ENCODE measurements at regions of chr6 and their contacts with region 1.

Region 1: DNA sequence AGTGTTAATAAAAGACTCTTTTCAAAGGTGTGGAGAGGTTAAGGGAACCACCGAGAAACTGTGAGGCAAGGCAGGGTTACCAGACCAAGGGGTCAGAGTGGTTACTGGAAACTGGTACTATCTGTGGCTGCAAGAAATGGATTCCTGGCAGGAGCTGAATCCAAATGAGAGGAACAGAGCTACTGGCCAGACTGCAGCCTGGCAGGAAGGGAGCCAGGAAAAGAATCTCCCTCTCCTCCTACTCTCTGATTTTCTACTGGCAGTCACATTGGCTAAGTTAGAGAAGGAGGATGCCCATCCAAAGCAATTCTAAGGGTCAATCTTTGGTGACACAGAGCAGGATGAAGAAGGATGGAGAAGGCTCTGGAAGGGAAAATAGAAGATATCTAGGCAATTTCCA is 211.5 kb downstream of the GRM1 start:
- DNase-seq: no peak
- H3K4me3 ChIP-seq: no peak overlapping the region
- H3K4me3 Mint-ChIP-seq: no peak overlapping the region
- H3K27ac ChIP-seq: no peak overlapping the region
- H3K27ac Mint-ChIP-seq: no peak overlapping the region
- H3K4me1 ChIP-seq: no peaks in the 10 kb centered on the region
- H3K4me1 Mint-ChIP-seq: no peaks in the 10 kb centered on the region
- H3K27me3 ChIP-seq: no peaks in the 10 kb centered on the region
- H3K27me3 Mint-ChIP-seq: no peaks in the 10 kb centered on the region

Region 2: GRCh38 chr6:144582939-144583613 is 1657.2 kb before region 1 on chr6:
- CTCF ChIA-PET with region 1: no interaction called
- POLR2A ChIA-PET with region 1: no interaction called
- intact Hi-C with region 1: no loop called
- DNase-seq: peak; percentile 57 to 75 (median 66)
- H3K4me3 ChIP-seq: peak overlapping the region; percentile 7 to 36
- H3K4me3 Mint-ChIP-seq: peak overlapping the region; percentile 76 to 91 (median 88)
- H3K27ac ChIP-seq: no peak overlapping the region
- H3K27ac Mint-ChIP-seq: peak overlapping the region; percentile 71 to 93 (median 84)
- H3K4me1 ChIP-seq: peaks cover 27% of the 10 kb centered on the region
- H3K4me1 Mint-ChIP-seq: peaks cover 25 to 44% (median 33%) of the 10 kb centered on the region in 4 donors
- H3K27me3 ChIP-seq: no peaks in the 10 kb centered on the region
- H3K27me3 Mint-ChIP-seq: no peaks in the 10 kb centered on the region

Region 3: DNA sequence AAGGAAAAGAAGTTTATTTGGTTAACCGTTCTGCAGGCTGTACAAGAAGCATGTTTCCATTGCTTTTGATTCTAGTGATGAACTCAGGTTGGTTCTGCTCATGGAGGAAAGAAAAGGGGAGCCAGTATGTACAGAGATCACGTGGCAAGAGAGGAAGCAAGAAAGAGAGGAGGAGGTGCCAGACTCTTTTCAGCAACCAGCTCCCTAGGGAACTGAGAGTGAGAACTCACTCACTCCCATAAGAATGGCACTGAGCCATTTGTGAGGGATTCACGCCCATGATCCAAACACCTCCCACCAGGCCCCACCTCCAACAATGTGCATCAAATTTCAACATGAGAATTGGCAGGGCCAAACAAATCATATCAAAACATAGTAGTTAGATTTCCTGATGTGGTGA is 1154.1 kb before region 1 on chr6:
- CTCF ChIA-PET with region 1: no interaction called
- POLR2A ChIA-PET with region 1: no interaction called
- intact Hi-C with region 1: loop called (anchors 10 kb)
- DNase-seq: no peak
- H3K4me3 ChIP-seq: no peak overlapping the region
- H3K4me3 Mint-ChIP-seq: no peak overlapping the region
- H3K27ac ChIP-seq: no peak overlapping the region
- H3K27ac Mint-ChIP-seq: no peak overlapping the region
- H3K4me1 ChIP-seq: no peaks in the 10 kb centered on the region
- H3K4me1 Mint-ChIP-seq: no peaks in the 10 kb centered on the region
- H3K27me3 ChIP-seq: no peaks in the 10 kb centered on the region
- H3K27me3 Mint-ChIP-seq: peaks cover 2 to 3% of the 10 kb centered on the region in 2 donors